Activated T-helper 2 cell treated with anti-CD3 and anti-CD28 coated beads, Interferon-gamma antibody, Interleukin-2, Interleukin-4, amounts not matched to agents 10 μg/mL and 5 μg/mL and 100 μg/mL, durations not matched to agents 14 hours and 24 hours and 36 hours (primary cell): ENCODE measurements at regions of chr10 and their contacts with region 1.

Region 1: GRCh38 chr10:69716711-69717560 is 84.8 kb upstream of the COL13A1 start:
- DNase-seq: peak; percentile 31
- H3K4me3 Mint-ChIP-seq: no peak overlapping the region
- H3K27ac Mint-ChIP-seq: no peak overlapping the region
- H3K4me1 Mint-ChIP-seq: no peaks in the 10 kb centered on the region
- H3K27me3 Mint-ChIP-seq: peaks cover 5% of the 10 kb centered on the region

Region 2: DNA sequence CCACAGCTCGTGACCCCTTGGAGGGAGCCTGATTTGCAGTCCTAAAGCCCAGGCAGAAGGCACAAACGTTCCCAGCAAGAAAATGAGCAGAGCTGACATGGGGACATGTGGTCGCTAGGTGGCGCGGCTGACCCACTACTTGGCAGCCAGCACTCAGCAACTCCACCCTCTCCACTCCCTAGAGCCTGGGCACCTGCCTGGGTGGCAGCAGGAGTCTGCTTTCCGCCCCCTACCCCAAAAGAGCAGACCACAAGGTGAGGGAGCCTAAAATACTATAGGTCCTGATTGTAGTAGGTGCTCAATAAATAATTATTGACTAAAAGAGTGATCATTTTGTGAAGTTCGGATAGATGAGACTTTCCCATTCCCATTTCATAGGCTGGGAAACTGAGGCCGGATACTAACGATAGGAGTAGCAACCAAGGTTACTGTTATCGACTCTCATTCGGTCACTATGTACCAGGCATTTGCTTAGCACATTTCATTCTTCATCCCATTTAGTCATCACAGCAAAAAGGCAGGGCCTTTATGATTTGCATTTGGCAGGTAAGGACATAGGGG is 201.2 kb before region 1 on chr10:
- intact Hi-C with region 1: loop called (anchors 2 kb)
- DNase-seq: peak; percentile 63
- H3K4me3 Mint-ChIP-seq: no peak overlapping the region
- H3K27ac Mint-ChIP-seq: no peak overlapping the region
- H3K4me1 Mint-ChIP-seq: no peaks in the 10 kb centered on the region
- H3K27me3 Mint-ChIP-seq: peaks cover 23% of the 10 kb centered on the region

Region 3: DNA sequence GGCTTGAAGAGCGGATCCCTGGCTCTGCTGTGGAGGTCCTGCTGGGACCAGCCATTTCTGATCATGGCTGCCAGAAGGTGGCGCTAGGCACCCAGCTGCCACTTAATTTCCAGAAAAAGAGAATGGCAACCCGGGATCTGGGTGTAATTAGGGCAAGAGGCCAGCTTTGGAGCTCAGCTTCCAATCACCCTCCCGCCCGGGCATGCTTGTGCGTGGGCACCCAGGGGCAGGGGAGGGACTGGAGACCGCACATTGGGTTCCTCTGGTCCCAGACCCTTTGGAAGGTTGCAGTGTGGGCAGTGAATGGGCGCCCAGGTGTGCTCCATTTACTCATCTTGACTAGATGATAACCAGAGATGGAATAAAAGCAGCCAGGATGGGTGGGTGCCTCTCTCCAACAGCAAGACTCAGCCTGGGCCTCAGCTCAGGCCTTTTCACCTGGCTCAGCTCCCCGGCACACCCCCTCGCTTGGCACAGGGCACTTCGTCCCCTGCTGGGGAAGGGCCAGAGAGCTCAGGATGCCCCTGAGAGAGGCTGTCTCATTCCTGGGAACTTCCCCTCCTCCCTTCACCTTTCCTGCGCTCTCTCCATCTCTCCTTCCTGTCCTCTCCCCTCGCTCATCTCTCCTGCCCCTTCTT is 72.2 kb before region 1 on chr10:
- intact Hi-C with region 1: loop called (anchors 1 kb)
- DNase-seq: no peak
- H3K4me3 Mint-ChIP-seq: no peak overlapping the region
- H3K27ac Mint-ChIP-seq: no peak overlapping the region
- H3K4me1 Mint-ChIP-seq: no peaks in the 10 kb centered on the region
- H3K27me3 Mint-ChIP-seq: peaks cover 5% of the 10 kb centered on the region